CD4-positive, alpha-beta memory T cell (primary cell): ENCODE measurements at regions of chr1 and their contacts with region 1.

Region 1: DNA sequence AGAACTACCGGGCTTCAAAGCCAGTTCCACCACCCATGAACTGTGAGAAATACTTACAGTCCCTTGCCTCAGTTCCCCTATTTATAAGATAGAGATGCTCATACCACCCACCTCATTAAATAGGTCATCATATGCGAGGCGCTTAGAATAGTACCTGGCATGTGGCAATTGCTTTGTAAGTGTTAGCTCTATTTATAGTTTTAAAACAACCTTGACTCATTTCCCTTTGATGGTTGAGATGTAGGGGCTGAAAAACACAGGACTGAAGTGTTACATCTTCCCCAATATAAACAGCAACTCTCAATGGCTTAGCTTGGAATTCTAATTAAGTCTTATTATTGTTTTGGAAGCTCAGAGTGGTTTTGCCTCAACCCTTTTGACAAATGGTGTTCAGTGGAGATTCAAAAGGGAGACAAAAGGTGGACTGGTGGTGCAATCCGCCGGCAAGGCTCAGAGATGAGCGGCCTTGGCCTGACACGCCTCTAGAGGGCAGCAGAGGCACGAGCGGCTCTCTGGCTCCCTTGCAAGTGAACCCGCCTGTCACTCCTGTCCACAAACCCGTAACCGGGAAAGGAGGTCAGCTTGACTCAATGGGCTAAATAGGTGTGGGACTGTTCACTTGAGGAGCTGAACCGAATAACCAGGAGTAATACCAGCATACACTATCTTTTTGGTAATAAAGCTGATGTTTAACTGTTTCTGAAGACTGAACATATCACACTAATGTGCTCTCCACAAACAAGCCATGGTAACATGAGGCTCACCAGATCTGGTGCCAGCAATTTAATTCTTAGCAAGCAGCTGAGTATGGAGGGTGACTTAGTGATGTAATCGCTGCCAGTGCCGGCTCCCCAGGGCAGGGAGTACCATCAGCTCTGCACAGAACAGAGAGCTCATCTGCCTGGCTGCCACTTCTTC is 19.5 kb upstream of the SMYD2 start:
- DNase-seq: peak; percentile 67 to 79 (median 74)
- H3K4me3 ChIP-seq: no peak overlapping the region
- H3K4me3 Mint-ChIP-seq: peak overlapping the region in 2 of 8 donors; percentile 25 to 52
- H3K27ac ChIP-seq: no peak overlapping the region
- H3K27ac Mint-ChIP-seq: no peak overlapping the region
- H3K4me1 ChIP-seq: peaks cover 5% of the 10 kb centered on the region
- H3K4me1 Mint-ChIP-seq: peaks cover 0 to 4% (median 0%) of the 10 kb centered on the region in 4 donors
- H3K27me3 ChIP-seq: peaks cover 26% of the 10 kb centered on the region
- H3K27me3 Mint-ChIP-seq: peaks cover 44 to 48% of the 10 kb centered on the region in 2 donors

Region 2: DNA sequence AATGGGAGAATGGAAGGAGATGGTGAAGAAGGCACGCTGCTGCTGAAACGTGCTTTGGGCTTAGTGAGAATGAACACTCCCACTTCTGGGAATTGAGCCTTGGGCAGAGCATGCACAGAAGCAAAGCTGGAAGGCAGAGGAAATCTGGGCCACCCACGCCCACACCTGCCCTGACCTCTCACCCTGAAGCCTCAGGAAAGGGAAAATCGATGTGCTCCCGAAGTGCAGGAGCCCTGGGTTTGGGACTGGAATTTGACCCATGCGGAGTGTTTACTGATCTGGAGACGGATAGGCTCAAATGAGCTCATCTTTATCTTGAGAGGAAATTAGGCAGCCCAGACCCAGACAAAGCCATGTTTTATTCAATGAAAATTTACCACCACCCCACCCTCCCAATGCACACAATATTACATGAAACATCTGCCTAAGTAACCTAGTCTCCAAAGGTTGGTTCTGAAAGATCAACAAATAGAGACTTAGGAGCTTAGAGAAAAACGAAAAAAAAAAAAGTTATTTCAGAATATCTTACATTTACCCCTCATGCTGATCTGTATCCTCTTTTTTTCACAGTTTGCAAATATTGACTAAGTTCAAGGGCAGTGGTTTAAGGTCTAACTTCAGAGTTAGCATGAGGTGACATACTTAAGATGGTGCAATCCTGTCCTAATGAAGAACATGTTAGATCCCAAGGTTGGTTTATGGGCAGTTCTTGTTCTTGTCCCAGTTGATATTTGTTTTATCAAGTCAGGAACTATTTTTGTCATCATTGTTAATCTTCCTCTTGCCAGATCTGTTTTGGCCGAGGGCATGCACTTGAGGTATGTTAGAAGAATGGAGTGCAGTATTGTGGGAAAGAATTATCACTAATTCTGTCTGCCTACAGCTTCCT is 210.7 kb before region 1 on chr1:
- CTCF ChIA-PET with region 1: no interaction called
- POLR2A ChIA-PET with region 1: no interaction called
- intact Hi-C with region 1: no loop called
- DNase-seq: no peak
- H3K4me3 ChIP-seq: no peak overlapping the region
- H3K4me3 Mint-ChIP-seq: no peak overlapping the region
- H3K27ac ChIP-seq: no peak overlapping the region
- H3K27ac Mint-ChIP-seq: no peak overlapping the region
- H3K4me1 ChIP-seq: no peaks in the 10 kb centered on the region
- H3K4me1 Mint-ChIP-seq: no peaks in the 10 kb centered on the region
- H3K27me3 ChIP-seq: no peaks in the 10 kb centered on the region
- H3K27me3 Mint-ChIP-seq: no peaks in the 10 kb centered on the region

Region 3: GRCh38 chr1:214229736-214230135 is 31.7 kb before region 1 on chr1:
- CTCF ChIA-PET with region 1: interaction called, 14 read pairs
- POLR2A ChIA-PET with region 1: no interaction called
- intact Hi-C with region 1: no loop called
- DNase-seq: no peak
- H3K4me3 ChIP-seq: no peak overlapping the region
- H3K4me3 Mint-ChIP-seq: no peak overlapping the region
- H3K27ac ChIP-seq: no peak overlapping the region
- H3K27ac Mint-ChIP-seq: no peak overlapping the region
- H3K4me1 ChIP-seq: no peaks in the 10 kb centered on the region
- H3K4me1 Mint-ChIP-seq: no peaks in the 10 kb centered on the region
- H3K27me3 ChIP-seq: no peaks in the 10 kb centered on the region
- H3K27me3 Mint-ChIP-seq: peaks cover 8 to 15% of the 10 kb centered on the region in 2 donors

Region 4: GRCh38 chr1:214292322-214292721 is 30.9 kb after region 1 on chr1:
- CTCF ChIA-PET with region 1: interaction called, 16 read pairs
- POLR2A ChIA-PET with region 1: no interaction called
- intact Hi-C with region 1: no loop called
- DNase-seq: no peak
- H3K4me3 ChIP-seq: no peak overlapping the region
- H3K4me3 Mint-ChIP-seq: no peak overlapping the region
- H3K27ac ChIP-seq: no peak overlapping the region
- H3K27ac Mint-ChIP-seq: no peak overlapping the region
- H3K4me1 ChIP-seq: peaks cover 8% of the 10 kb centered on the region
- H3K4me1 Mint-ChIP-seq: peaks cover 15 to 47% (median 38%) of the 10 kb centered on the region in 4 donors
- H3K27me3 ChIP-seq: no peaks in the 10 kb centered on the region
- H3K27me3 Mint-ChIP-seq: no peaks in the 10 kb centered on the region

Region 5: GRCh38 chr1:214316593-214316992 is 55.1 kb after region 1 on chr1:
- CTCF ChIA-PET with region 1: interaction called, 26 read pairs
- POLR2A ChIA-PET with region 1: no interaction called
- intact Hi-C with region 1: no loop called
- DNase-seq: no peak
- H3K4me3 ChIP-seq: no peak overlapping the region
- H3K4me3 Mint-ChIP-seq: no peak overlapping the region
- H3K27ac ChIP-seq: no peak overlapping the region
- H3K27ac Mint-ChIP-seq: no peak overlapping the region
- H3K4me1 ChIP-seq: no peaks in the 10 kb centered on the region
- H3K4me1 Mint-ChIP-seq: peaks cover 2 to 10% (median 6%) of the 10 kb centered on the region in 4 donors
- H3K27me3 ChIP-seq: no peaks in the 10 kb centered on the region
- H3K27me3 Mint-ChIP-seq: no peaks in the 10 kb centered on the region

Region 6: DNA sequence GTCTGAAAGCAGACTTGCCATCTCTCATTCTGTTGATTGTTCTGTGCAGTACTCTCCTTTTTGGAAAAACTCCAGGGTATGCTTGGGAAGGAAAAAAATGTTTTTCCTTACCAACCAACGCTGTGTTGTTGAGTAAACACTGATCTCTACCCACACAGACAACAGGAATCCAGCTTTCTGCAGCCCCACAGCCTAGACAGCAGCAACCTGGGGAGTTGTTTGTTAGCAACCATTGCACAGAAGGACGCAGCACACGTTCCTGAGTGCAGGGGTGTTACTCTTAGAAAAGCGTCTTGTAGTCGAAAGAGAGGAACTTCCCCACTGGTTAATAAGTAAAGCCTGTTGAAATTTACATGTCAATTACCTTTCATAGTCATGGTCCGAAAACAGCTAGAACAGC is 76.0 kb after region 1 on chr1:
- CTCF ChIA-PET with region 1: interaction called, 787 read pairs
- POLR2A ChIA-PET with region 1: interaction called, 3 read pairs
- intact Hi-C with region 1: no loop called
- DNase-seq: no peak
- H3K4me3 ChIP-seq: no peak overlapping the region
- H3K4me3 Mint-ChIP-seq: no peak overlapping the region
- H3K27ac ChIP-seq: no peak overlapping the region
- H3K27ac Mint-ChIP-seq: no peak overlapping the region
- H3K4me1 ChIP-seq: no peaks in the 10 kb centered on the region
- H3K4me1 Mint-ChIP-seq: no peaks in the 10 kb centered on the region
- H3K27me3 ChIP-seq: no peaks in the 10 kb centered on the region
- H3K27me3 Mint-ChIP-seq: no peaks in the 10 kb centered on the region

Region 7: DNA sequence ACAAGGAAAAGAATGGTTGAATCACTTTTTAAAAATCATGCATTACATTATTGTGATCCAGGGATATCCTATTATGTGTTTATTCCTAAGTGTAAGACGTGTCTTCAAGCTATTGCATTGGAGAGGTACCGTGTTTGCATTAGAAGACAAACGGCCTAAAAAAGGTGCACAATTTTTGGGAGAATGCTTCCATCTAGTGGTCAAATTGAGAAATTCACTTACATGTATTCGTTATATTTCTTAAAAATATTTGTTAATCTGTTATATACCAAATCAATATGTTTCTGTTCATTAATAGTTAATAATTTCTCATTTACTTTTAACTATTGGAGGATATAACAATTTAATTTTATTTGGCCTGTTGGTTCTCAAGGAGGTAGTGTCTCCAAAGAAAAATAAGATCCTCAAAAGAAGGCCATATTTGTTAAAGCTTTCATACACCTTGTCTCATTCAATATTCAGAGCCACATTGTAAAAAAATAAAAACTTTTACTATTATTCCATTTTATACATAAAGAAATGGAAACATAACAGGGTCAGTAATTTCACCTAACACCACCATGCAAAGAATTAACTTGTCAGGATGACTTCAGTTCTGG is 1265.2 kb after region 1 on chr1:
- CTCF ChIA-PET with region 1: interaction called, 11 read pairs
- POLR2A ChIA-PET with region 1: no interaction called
- intact Hi-C with region 1: loop called (anchors 1 kb)
- DNase-seq: peak in 4 of 5 donors; percentile 23 to 33 (median 32)
- H3K4me3 ChIP-seq: no peak overlapping the region
- H3K4me3 Mint-ChIP-seq: no peak overlapping the region
- H3K27ac ChIP-seq: no peak overlapping the region
- H3K27ac Mint-ChIP-seq: no peak overlapping the region
- H3K4me1 ChIP-seq: no peaks in the 10 kb centered on the region
- H3K4me1 Mint-ChIP-seq: peaks cover 0 to 1% (median 0%) of the 10 kb centered on the region in 4 donors
- H3K27me3 ChIP-seq: no peaks in the 10 kb centered on the region
- H3K27me3 Mint-ChIP-seq: peaks cover 0 to 1% of the 10 kb centered on the region in 2 donors